Activated B cell treated with CpG ODN at 0.5 μM for 24 hours (primary cell): ENCODE measurements at regions of chr2 and their contacts with region 1.

Region 1: DNA sequence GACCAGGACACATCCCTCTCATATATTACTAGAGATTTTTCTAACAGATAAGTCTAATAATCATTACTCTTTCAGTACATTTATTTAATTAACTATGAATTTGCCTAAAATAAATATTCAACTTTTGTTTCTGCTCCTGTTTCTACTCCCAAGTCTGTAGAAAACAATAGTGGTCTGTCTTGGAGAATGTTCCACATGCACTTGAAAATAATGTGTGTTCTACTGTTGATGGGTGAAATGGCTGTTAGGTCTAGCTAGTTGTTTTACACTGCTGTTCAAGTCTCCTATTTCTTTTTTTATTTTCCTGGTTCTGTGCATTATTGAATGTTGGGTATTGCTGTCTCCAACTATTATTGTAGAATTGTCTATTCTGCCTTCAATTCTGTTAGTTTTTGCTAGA is 47.2 kb downstream of the SPOPL start:
- DNase-seq: no peak
- ATAC-seq: no peak
- H3K4me3 Mint-ChIP-seq: no peak overlapping the region
- H3K27ac Mint-ChIP-seq: no peak overlapping the region
- H3K4me1 Mint-ChIP-seq: peaks cover 41% of the 10 kb centered on the region
- H3K27me3 Mint-ChIP-seq: no peaks in the 10 kb centered on the region
- CTCF ChIP-seq: no peak

Region 2: DNA sequence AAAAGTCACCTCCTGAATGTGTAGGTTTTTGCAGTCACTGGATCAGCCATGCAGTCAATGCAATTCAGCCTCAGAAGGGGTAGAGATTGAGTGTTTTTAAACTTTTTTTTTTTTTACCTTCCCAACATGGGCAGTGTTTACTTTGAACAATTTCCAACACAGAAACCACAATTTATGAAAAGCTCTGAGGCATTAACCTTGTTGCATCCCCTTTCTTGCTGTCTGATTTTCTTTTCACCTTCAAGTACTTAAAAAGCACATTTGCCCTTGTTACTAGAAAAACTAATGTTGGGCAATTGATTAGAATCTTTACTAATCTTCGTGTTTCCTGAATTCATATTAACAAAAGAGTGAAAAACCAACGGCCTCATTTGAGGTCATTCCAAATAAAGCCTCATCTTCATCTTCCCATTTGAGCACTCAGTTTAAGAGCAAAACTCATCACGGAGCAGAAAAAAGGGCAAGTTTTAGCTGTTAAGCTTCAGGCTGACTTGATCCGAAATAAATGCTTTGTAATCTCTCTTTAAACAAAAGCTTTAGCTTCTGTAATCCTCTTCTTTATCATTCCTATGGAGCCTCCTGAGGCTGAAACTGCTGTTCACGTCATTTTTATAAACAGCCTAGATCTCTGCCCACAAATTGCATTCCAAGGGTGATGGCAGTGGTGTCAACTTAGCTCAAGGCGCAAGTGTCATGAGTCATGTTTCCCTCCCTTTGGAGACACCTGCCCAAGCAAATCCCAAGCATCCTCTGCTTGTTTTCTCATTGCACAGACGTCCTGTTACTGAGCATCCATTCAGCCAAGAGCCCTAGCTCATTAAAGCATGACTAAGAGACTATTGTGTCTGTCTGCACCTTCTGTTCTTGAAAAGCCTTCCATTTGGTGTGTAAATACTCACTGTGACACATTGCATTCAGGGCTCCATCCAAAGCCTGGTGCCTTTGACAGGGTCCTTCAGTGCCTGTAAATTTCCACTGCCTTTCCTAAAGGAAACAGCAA is 476.8 kb before region 1 on chr2:
- CTCF ChIA-PET with region 1: no interaction called
- POLR2A ChIA-PET with region 1: no interaction called
- intact Hi-C with region 1: no loop called
- DNase-seq: no peak
- ATAC-seq: no peak
- H3K4me3 Mint-ChIP-seq: no peak overlapping the region
- H3K27ac Mint-ChIP-seq: no peak overlapping the region
- H3K4me1 Mint-ChIP-seq: no peaks in the 10 kb centered on the region
- H3K27me3 Mint-ChIP-seq: no peaks in the 10 kb centered on the region
- CTCF ChIP-seq: no peak

Region 3: DNA sequence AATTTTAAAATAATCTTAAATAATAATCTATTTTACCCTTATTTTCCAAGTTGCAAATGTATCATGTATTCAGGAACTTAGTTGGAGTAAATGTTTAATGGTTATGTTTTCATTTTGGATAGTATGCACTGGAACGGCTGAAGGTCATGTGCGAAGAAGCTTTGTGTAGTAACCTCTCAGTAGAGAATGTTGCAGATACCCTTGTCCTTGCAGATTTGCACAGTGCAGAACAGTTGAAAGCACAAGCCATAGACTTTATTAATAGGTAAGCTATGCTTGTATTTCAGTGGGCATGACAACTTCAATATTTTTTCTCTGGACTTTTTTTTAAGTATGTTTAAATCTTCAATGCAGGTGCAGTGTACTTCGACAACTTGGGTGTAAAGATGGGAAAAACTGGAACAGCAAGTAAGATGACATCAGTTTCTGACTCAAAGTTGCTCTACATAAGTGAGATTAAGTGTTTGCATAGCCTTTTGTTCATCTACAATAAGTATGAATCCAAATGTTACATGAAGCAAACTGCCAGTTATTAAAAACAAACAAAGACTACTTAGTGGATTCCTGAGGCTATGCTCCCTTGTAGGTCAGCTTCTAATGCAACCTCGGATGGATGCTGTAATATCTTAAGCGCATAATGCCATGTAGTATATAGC is 15.9 kb after region 1 on chr2:
- CTCF ChIA-PET with region 1: interaction called, 3 read pairs
- POLR2A ChIA-PET with region 1: no interaction called
- intact Hi-C with region 1: loop called (anchors 2 kb)
- DNase-seq: no peak
- ATAC-seq: no peak
- H3K4me3 Mint-ChIP-seq: no peak overlapping the region
- H3K27ac Mint-ChIP-seq: no peak overlapping the region
- H3K4me1 Mint-ChIP-seq: no peaks in the 10 kb centered on the region
- H3K27me3 Mint-ChIP-seq: no peaks in the 10 kb centered on the region
- CTCF ChIP-seq: no peak

Region 4: GRCh38 chr2:138712212-138712979 is 163.6 kb after region 1 on chr2:
- CTCF ChIA-PET with region 1: no interaction called
- POLR2A ChIA-PET with region 1: no interaction called
- intact Hi-C with region 1: no loop called
- DNase-seq: no peak
- ATAC-seq: no peak
- H3K4me3 Mint-ChIP-seq: no peak overlapping the region
- H3K27ac Mint-ChIP-seq: no peak overlapping the region
- H3K4me1 Mint-ChIP-seq: no peaks in the 10 kb centered on the region
- H3K27me3 Mint-ChIP-seq: peaks cover 1% of the 10 kb centered on the region
- CTCF ChIP-seq: no peak